ENCODE measurements at regions of chr19 and their contacts with region 1.

Region 1: GRCh38 chr19:11587302-11587974 is 9.8 kb upstream of the ZNF627 start:
- DNase-seq: peak; percentile 76
- ATAC-seq: peak; percentile 81
- H3K4me3 Mint-ChIP-seq: no peak overlapping the region
- H3K27ac Mint-ChIP-seq: peak overlapping the region; percentile 30
- H3K4me1 Mint-ChIP-seq: peaks cover 54% of the 10 kb centered on the region
- H3K27me3 Mint-ChIP-seq: no peaks in the 10 kb centered on the region
- CTCF ChIP-seq: no peak

Region 2: GRCh38 chr19:11453468-11454341 is 133.7 kb before region 1 on chr19:
- CTCF ChIA-PET with region 1: no interaction called
- POLR2A ChIA-PET with region 1: no interaction called
- intact Hi-C with region 1: loop called (anchors 5 kb)
- DNase-seq: no peak
- ATAC-seq: peak; percentile 49
- H3K4me3 Mint-ChIP-seq: no peak overlapping the region
- H3K27ac Mint-ChIP-seq: no peak overlapping the region
- H3K4me1 Mint-ChIP-seq: peaks cover 7% of the 10 kb centered on the region
- H3K27me3 Mint-ChIP-seq: peaks cover 3% of the 10 kb centered on the region
- CTCF ChIP-seq: no peak

Region 3: GRCh38 chr19:11496391-11497163 is 90.9 kb before region 1 on chr19:
- CTCF ChIA-PET with region 1: interaction called, 3 read pairs
- POLR2A ChIA-PET with region 1: no interaction called
- intact Hi-C with region 1: loop called (anchors 1 kb)
- DNase-seq: peak; percentile 56
- ATAC-seq: peak; percentile 84
- H3K4me3 Mint-ChIP-seq: no peak overlapping the region
- H3K27ac Mint-ChIP-seq: no peak overlapping the region
- H3K4me1 Mint-ChIP-seq: no peaks in the 10 kb centered on the region
- H3K27me3 Mint-ChIP-seq: no peaks in the 10 kb centered on the region
- CTCF ChIP-seq: no peak

Region 4: GRCh38 chr19:11535792-11536595 is 51.4 kb before region 1 on chr19:
- CTCF ChIA-PET with region 1: interaction called, 21 read pairs
- POLR2A ChIA-PET with region 1: interaction called, 6 read pairs
- intact Hi-C with region 1: loop called (anchors 1 kb)
- DNase-seq: peak; percentile 96
- ATAC-seq: peak; percentile 92
- H3K4me3 Mint-ChIP-seq: peak overlapping the region; percentile 68
- H3K27ac Mint-ChIP-seq: peak overlapping the region; percentile 67
- H3K4me1 Mint-ChIP-seq: peaks cover 23% of the 10 kb centered on the region
- H3K27me3 Mint-ChIP-seq: peaks cover 14% of the 10 kb centered on the region
- CTCF ChIP-seq: no peak

Region 5: DNA sequence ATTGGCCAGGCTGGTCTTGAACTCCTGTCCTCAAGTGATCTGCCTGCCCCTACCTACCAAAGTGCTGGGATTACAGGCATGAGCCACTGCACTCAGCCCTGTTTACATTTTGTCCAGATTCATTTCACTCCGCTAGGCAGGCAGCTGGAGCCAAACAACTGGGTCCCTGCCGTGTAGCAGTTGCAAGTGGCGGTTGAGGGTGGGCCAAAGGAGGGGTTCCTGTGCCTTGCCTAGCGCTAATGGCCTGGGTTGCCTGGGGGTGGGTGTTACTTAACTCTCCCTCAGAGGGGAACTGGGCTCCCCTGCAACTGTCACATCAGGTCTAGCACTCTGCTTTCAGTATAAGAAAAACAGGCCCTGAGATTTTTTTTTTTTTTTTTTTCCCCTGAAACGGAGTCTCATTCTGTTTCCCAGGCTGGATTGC is 17.4 kb before region 1 on chr19:
- CTCF ChIA-PET with region 1: interaction called, 15 read pairs
- POLR2A ChIA-PET with region 1: interaction called, 314 read pairs
- intact Hi-C with region 1: no loop called
- DNase-seq: no peak
- ATAC-seq: no peak
- H3K4me3 Mint-ChIP-seq: no peak overlapping the region
- H3K27ac Mint-ChIP-seq: no peak overlapping the region
- H3K4me1 Mint-ChIP-seq: peaks cover 68% of the 10 kb centered on the region
- H3K27me3 Mint-ChIP-seq: no peaks in the 10 kb centered on the region
- CTCF ChIP-seq: no peak

Region 6: GRCh38 chr19:11649941-11650340 is 62.5 kb after region 1 on chr19:
- CTCF ChIA-PET with region 1: no interaction called
- POLR2A ChIA-PET with region 1: no interaction called
- intact Hi-C with region 1: no loop called
- DNase-seq: no peak
- ATAC-seq: no peak
- H3K4me3 Mint-ChIP-seq: no peak overlapping the region
- H3K27ac Mint-ChIP-seq: no peak overlapping the region
- H3K4me1 Mint-ChIP-seq: no peaks in the 10 kb centered on the region
- H3K27me3 Mint-ChIP-seq: no peaks in the 10 kb centered on the region
- CTCF ChIP-seq: no peak